ENCODE measurements at regions of chr7 and their contacts with region 1.

Region 1: GRCh38 chr7:37181550-37181932 is 267.1 kb downstream of the ELMO1 start:
- DNase-seq: no peak
- H3K4me3 ChIP-seq: no peak overlapping the region
- H3K27me3 ChIP-seq: no peaks in the 10 kb centered on the region
- CTCF ChIP-seq: no peak

Region 2: GRCh38 chr7:36967387-36967786 is 214.2 kb before region 1 on chr7:
- CTCF ChIA-PET with region 1: interaction called, 149 read pairs
- POLR2A ChIA-PET with region 1: no interaction called
- DNase-seq: no peak
- H3K4me3 ChIP-seq: no peak overlapping the region
- H3K27me3 ChIP-seq: no peaks in the 10 kb centered on the region
- CTCF ChIP-seq: peak; percentile 83

Region 3: GRCh38 chr7:36979810-36980248 is 201.7 kb before region 1 on chr7:
- CTCF ChIA-PET with region 1: interaction called, 153 read pairs
- POLR2A ChIA-PET with region 1: no interaction called
- DNase-seq: no peak
- H3K4me3 ChIP-seq: no peak overlapping the region
- H3K27me3 ChIP-seq: no peaks in the 10 kb centered on the region
- CTCF ChIP-seq: no peak

Region 4: DNA sequence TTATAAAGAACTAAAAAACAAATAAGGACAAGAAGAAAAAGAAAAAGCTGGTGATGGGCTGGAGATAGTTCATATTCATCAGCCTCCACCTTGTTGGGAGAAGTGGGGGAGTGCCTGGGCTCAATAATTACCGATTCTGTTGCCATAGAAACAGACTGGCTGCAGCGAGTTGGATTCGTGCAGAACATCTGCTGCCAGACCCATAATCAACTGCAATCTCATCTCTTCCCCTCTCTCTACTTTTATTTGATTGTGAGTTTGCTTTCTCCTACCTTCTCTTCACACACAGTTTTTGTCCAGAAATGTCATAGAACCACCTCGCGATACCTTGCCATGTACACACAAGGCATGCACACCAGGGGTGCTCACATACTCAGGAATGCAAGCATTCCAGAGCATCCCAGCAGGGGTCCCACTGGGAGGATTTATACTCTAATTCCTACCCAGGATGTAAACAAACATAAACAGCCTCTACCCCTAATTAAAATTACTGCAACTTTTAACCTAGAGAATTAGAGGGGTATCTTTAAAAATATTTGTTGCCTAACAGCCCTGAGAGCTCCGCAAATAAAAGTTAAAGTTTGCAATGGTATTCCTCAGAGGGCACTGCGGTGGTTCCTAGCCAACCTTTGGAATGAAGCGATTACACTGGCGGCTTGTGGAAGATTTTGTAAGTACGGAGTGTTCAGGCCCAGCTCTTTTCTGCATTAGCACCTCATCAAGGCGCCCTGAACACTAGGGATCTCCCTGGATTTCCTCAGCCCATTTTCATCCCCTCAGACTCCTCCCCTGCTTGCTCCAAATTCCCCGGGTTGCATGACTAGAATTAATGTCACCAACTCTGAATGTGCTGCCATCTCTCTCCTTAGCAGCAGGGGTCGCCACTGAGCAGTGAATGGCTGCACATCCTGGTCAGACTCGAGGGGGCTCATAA is 194.8 kb before region 1 on chr7:
- CTCF ChIA-PET with region 1: interaction called, 153 read pairs
- POLR2A ChIA-PET with region 1: no interaction called
- DNase-seq: no peak
- H3K4me3 ChIP-seq: no peak overlapping the region
- H3K27me3 ChIP-seq: no peaks in the 10 kb centered on the region
- CTCF ChIP-seq: peak; percentile 94

Region 5: GRCh38 chr7:37007268-37007667 is 174.3 kb before region 1 on chr7:
- CTCF ChIA-PET with region 1: interaction called, 22 read pairs
- POLR2A ChIA-PET with region 1: no interaction called
- DNase-seq: no peak
- H3K4me3 ChIP-seq: no peak overlapping the region
- H3K27me3 ChIP-seq: no peaks in the 10 kb centered on the region
- CTCF ChIP-seq: no peak

Region 6: DNA sequence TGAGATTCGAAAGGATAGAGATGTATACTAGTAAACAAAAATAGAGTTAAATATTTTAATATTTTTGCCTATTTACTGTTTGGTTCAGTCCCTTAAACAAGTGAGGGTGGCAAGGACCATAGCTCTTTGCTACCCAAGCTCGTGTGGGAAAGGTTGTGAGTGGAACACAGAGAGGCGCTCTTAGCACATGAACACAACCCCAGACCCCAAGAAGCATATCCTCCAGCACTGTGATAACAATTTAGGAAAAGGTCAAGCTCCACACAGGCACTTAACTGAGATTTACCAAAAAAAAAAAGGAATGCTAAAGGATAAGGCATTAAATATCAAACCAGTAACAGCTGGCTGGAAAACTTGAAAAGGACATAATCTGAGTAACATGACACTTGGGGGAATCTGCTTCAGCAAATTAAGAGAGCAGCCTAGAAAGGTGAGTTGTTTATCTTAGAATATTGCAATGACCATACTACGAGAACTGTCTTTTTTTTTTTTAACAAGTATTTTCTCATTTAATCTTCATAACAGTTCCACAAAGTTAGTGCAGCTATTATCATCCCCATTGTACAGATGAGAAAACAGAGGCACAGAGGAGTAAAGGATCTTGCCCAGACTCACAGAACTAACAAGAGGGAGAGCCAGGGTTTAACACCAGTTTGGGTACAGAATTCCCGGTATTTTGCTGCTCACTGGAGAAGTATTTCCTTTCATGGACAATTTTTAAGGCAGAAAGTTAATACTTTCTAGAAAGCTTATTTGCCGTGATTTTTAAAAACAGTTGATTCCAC is 153.8 kb before region 1 on chr7:
- CTCF ChIA-PET with region 1: interaction called, 25 read pairs
- POLR2A ChIA-PET with region 1: no interaction called
- DNase-seq: no peak
- H3K4me3 ChIP-seq: no peak overlapping the region
- H3K27me3 ChIP-seq: no peaks in the 10 kb centered on the region; the same call in 1 of the 2 replicates
- CTCF ChIP-seq: no peak

Region 7: DNA sequence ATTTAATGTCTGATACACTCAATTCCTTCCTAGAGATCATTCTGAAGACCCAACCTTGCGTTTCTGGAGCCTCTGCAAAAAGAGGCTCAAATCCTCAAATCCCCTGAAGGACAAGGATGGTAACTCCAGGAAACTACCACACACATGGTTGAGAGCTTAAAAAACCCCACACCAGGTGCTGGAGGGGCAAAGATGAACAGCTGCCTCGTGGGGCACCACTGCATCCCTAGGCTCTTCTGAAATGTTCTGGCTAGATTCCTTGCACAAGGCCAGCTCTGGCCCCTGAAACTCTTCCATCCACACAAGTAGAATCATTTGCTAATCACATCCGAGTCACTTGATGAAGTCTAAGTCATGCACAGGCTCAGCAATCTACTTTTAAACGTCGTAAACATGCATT is 19.4 kb before region 1 on chr7:
- CTCF ChIA-PET with region 1: no interaction called
- POLR2A ChIA-PET with region 1: no interaction called
- DNase-seq: no peak
- H3K4me3 ChIP-seq: no peak overlapping the region
- H3K27me3 ChIP-seq: no peaks in the 10 kb centered on the region
- CTCF ChIP-seq: no peak

Region 8: GRCh38 chr7:37201003-37201875 is 19.7 kb after region 1 on chr7:
- CTCF ChIA-PET with region 1: interaction called, 30 read pairs
- POLR2A ChIA-PET with region 1: no interaction called
- DNase-seq: no peak
- H3K4me3 ChIP-seq: no peak overlapping the region
- H3K27me3 ChIP-seq: no peaks in the 10 kb centered on the region
- CTCF ChIP-seq: peak; percentile 83

Region 9: GRCh38 chr7:37218956-37219355 is 37.4 kb after region 1 on chr7:
- CTCF ChIA-PET with region 1: no interaction called
- POLR2A ChIA-PET with region 1: no interaction called
- DNase-seq: no peak
- H3K4me3 ChIP-seq: no peak overlapping the region
- H3K27me3 ChIP-seq: no peaks in the 10 kb centered on the region
- CTCF ChIP-seq: no peak

Measured in BJ (cell line).